Aorta (tissue), 5 donors: ENCODE measurements at regions of chr5 and their contacts with region 1.

Region 1: GRCh38 chr5:9544502-9545135 is 1.3 kb downstream of the SEMA5A start:
- DNase-seq: peak; percentile 85 to 95
- ATAC-seq: peak; percentile 92
- H3K4me3 ChIP-seq: peak overlapping the region; percentile 76 to 81
- H3K27ac ChIP-seq: peak overlapping the region in 1 of 2 donors; percentile 7
- H3K4me1 ChIP-seq: no peaks in the 10 kb centered on the region
- H3K27me3 ChIP-seq: no peaks in the 10 kb centered on the region

Region 2: GRCh38 chr5:9059920-9060691 is 484.5 kb before region 1 on chr5:
- intact Hi-C with region 1: loop called in 1 of 2 experiments (anchors 10 kb)
- DNase-seq: peak; percentile 63 to 74
- ATAC-seq: peak; percentile 64
- H3K4me3 ChIP-seq: no peak overlapping the region
- H3K27ac ChIP-seq: no peak overlapping the region
- H3K4me1 ChIP-seq: peaks cover 2 to 3% of the 10 kb centered on the region in 2 donors
- H3K27me3 ChIP-seq: no peaks in the 10 kb centered on the region

Region 3: DNA sequence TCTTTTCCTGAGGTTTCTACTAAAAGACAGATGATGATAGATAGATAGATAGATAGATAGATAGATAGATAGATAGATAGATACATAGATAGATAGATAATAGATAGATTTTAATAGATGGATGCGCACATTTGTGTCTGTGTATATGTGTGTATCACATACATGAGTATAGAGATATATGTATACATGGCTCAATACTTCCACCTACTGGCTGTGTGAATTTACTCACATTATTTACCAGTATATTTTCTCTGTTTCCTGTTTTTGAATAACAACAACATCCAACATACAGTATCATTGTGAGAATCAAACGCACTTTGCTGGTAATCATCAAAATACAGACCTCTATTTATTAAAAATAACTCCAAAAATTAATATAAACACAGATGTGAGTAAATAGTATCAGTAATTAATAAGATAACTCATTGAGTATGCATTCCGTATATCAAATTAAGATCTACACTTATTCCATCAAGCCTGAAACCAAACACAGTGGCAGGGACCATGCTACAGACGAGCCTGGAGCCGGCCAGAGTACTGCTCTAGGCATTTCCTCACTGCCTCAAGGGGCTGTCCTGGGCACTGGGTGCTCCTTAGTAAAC is 336.7 kb before region 1 on chr5:
- intact Hi-C with region 1: loop called in 1 of 2 experiments (anchors 10 kb)
- DNase-seq: no peak
- ATAC-seq: no peak
- H3K4me3 ChIP-seq: no peak overlapping the region
- H3K27ac ChIP-seq: no peak overlapping the region
- H3K4me1 ChIP-seq: no peaks in the 10 kb centered on the region
- H3K27me3 ChIP-seq: no peaks in the 10 kb centered on the region

Region 4: DNA sequence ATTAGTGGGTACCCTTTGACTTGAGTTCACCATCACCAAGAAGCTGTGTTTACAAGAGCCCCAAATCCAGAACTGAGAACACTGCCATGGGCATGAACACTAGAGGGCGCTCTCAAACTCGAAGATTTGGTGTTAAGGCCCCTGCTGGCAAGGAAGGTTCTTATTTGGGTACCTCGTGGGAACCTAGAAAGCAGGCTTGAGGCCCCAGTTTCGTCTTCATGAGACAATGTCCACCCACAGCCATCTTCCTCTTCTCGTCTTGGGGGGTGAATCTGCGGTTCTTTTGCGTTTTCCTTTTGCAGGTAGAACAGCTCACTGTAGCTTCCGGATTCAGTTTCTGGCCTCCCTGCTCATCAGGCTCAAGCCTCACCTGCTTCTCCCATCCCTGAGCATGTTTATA is 182.8 kb before region 1 on chr5:
- intact Hi-C with region 1: loop called (anchors 10 kb)
- DNase-seq: no peak
- ATAC-seq: no peak
- H3K4me3 ChIP-seq: no peak overlapping the region
- H3K27ac ChIP-seq: no peak overlapping the region
- H3K4me1 ChIP-seq: no peaks in the 10 kb centered on the region
- H3K27me3 ChIP-seq: no peaks in the 10 kb centered on the region

Region 5: GRCh38 chr5:9582406-9582805 is 37.8 kb after region 1 on chr5:
- intact Hi-C with region 1: no loop called
- DNase-seq: no peak
- ATAC-seq: no peak
- H3K4me3 ChIP-seq: no peak overlapping the region
- H3K27ac ChIP-seq: no peak overlapping the region
- H3K4me1 ChIP-seq: no peaks in the 10 kb centered on the region
- H3K27me3 ChIP-seq: no peaks in the 10 kb centered on the region

Region 6: GRCh38 chr5:9622971-9623421 is 78.4 kb after region 1 on chr5:
- intact Hi-C with region 1: loop called in 1 of 2 experiments (anchors 5 kb)
- DNase-seq: no peak
- ATAC-seq: no peak
- H3K4me3 ChIP-seq: no peak overlapping the region
- H3K27ac ChIP-seq: no peak overlapping the region
- H3K4me1 ChIP-seq: no peaks in the 10 kb centered on the region
- H3K27me3 ChIP-seq: no peaks in the 10 kb centered on the region